Left colon (tissue), 2 donors: ENCODE measurements at regions of chr9 and their contacts with region 1.

Region 1: DNA sequence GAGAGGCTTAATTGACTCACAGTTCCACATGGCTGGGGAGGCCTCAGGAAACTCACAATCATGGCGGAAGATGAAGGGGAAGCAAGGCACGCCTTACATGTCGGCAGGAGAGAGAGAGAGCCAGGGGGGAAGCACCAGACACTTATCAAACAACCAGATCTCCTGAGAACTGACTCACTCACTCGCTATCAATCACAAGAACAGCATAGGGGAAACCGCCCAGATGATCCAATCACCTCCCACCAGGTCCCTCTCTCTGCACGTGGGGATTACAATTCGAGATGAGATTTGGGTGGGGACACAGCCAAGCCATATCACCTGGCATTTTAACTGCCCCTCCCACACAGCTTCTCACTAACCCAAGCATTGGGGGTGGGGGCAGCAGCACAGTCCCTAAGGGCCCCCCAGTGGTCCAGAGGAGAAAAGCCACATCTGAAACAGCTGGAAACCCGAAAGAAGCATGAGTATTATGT is 76.1 kb upstream of the ASS1 start:
- DNase-seq: no peak
- ATAC-seq: peak; percentile 12

Region 2: DNA sequence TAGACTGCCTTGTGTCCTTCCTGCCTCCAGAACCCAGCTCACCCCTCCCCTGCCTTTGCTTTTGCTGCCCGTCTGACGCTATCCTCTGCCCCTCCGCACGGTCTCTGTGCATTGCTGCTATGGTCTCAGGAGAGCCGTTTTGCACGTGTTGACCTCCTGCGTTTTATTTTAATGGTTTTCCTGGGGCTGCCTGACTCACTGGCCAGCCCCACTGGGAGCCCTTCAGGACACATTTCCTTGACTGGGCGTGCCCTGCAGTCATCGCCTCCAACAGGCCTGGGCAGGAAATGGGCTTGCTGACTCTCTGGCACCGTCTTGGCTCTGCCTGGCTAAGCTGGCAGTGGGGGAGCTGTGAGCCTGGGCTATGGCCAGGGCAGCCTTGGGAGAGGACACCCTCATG is 58.2 kb after region 1 on chr9:
- intact Hi-C with region 1: loop called in 1 of 2 experiments (anchors 10 kb)
- DNase-seq: peak; percentile 58 to 83
- ATAC-seq: peak; percentile 90